A549 (cell line): ENCODE measurements at regions of chr11 and their contacts with region 1.

Region 1: GRCh38 chr11:4636962-4637661 is at the start of gene OR51D1:
- DNase-seq: peak; percentile 65 to 66
- ATAC-seq: peak; percentile 84 to 98
- H3K4me3 ChIP-seq: no peak within 1 kb of the TSS
- H3K27ac ChIP-seq: no peak within 1 kb of the TSS
- H3K4me1 ChIP-seq: no peaks in the 10 kb centered on the region
- CTCF ChIP-seq: peak; percentile 72
- EP300 ChIP-seq: no peak
- POLR2A ChIP-seq: no peak
- RAD21 ChIP-seq: peak; percentile 57 to 74
- polyA plus RNA-seq, gene OR51D1: not detected in 2 replicates

Region 2: DNA sequence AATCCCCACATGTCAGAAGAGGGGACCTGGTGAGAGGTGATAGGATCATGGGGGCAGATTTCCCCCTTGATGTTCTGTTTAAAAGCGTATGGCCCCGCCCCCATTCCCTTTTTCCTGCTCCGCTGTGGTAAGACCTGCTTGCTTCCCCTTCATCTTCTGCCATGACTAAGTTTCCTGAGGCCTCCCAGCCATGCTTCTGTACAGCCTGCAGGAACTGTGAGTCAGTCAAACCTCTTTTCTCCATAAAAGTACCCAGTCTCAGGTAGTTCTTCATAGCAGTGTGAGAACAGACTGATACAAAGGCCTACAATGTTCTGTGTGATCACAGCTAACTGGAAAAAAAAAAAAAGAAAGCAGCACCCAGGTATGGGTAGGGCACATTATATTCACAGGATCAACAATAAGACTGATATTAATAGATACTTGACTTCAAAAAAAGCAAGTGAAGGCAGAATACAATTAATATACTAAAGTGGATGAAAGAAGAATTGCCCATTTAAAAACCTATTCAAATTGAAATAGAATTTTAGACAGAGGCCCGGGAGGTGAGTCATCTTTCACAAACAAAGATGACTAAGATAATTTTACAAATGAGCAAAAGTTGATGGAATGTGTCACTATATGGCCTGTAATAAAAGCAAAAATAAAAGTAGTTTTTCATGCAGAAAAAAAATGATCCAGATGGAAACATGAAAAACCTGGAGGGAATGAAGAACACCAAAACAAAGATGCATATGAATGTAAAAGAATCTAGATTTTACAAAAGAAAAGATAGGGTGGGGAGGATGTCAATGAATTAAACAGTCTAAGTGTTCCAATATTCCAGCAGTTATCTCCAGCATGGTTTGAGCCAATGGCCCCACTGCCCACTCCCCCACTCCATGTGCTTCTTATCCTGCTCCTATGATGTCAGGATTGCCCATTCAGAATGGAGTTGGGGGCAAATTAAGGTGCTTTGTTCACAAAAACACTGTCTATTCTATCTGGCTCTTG is 156.2 kb before region 1 on chr11:
- CTCF ChIA-PET with region 1: no interaction called
- POLR2A ChIA-PET with region 1: no interaction called
- DNase-seq: no peak
- ATAC-seq: no peak
- H3K4me3 ChIP-seq: no peak overlapping the region
- H3K27ac ChIP-seq: no peak overlapping the region
- H3K4me1 ChIP-seq: peaks cover 8% of the 10 kb centered on the region; the same call in 2 of the 3 replicates
- CTCF ChIP-seq: no peak
- EP300 ChIP-seq: no peak
- POLR2A ChIP-seq: no peak
- RAD21 ChIP-seq: no peak

Region 3: GRCh38 chr11:4593739-4594138 is 43.4 kb before region 1 on chr11 and contains the start of gene OR52I1:
- CTCF ChIA-PET with region 1: interaction called, 10 read pairs
- POLR2A ChIA-PET with region 1: no interaction called
- DNase-seq: no peak
- ATAC-seq: no peak
- H3K4me3 ChIP-seq: no peak within 1 kb of the TSS
- H3K27ac ChIP-seq: no peak within 1 kb of the TSS
- H3K4me1 ChIP-seq: no peaks in the 10 kb centered on the region
- CTCF ChIP-seq: no peak
- EP300 ChIP-seq: no peak
- POLR2A ChIP-seq: no peak
- RAD21 ChIP-seq: no peak
- polyA plus RNA-seq, gene OR52I1: not detected in 2 replicates

Region 4: GRCh38 chr11:4626207-4627099 is 10.7 kb before region 1 on chr11:
- CTCF ChIA-PET with region 1: interaction called, 53 read pairs
- POLR2A ChIA-PET with region 1: no interaction called
- DNase-seq: peak; percentile 8 to 78
- ATAC-seq: peak; percentile 87 to 95; a peak in 5 of 6 replicates
- H3K4me3 ChIP-seq: no peak overlapping the region
- H3K27ac ChIP-seq: no peak overlapping the region
- H3K4me1 ChIP-seq: no peaks in the 10 kb centered on the region
- CTCF ChIP-seq: peak; percentile 48
- EP300 ChIP-seq: no peak
- POLR2A ChIP-seq: no peak
- RAD21 ChIP-seq: peak; percentile 63 to 73

Region 5: DNA sequence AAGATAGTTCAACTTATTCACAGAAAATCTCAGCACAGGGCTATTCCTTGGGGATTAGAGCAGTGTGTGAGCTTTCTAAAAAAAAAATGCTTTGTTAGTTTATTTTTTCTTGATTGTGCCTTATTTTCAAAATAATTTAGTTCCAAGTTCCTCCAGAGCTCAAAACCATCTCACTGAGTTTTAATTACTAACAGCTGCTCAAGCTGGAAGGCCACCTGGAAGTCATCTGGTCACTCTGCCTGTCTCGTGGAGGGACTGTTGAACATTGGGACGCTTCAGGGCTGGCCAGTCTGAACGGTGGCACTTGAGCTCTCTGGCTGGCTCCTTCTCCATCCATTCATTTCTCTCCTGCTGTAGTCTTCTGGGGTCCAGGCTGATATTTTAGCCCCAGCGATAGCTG is 10.7 kb after region 1 on chr11:
- CTCF ChIA-PET with region 1: interaction called, 18 read pairs
- POLR2A ChIA-PET with region 1: no interaction called
- DNase-seq: no peak
- ATAC-seq: no peak
- H3K4me3 ChIP-seq: no peak overlapping the region
- H3K27ac ChIP-seq: no peak overlapping the region
- H3K4me1 ChIP-seq: no peaks in the 10 kb centered on the region
- CTCF ChIP-seq: no peak
- EP300 ChIP-seq: no peak
- POLR2A ChIP-seq: no peak
- RAD21 ChIP-seq: no peak

Region 6: GRCh38 chr11:4782488-4782887 is 145.4 kb after region 1 on chr11:
- CTCF ChIA-PET with region 1: no interaction called
- POLR2A ChIA-PET with region 1: no interaction called
- DNase-seq: no peak
- ATAC-seq: no peak
- H3K4me3 ChIP-seq: no peak overlapping the region
- H3K27ac ChIP-seq: no peak overlapping the region
- H3K4me1 ChIP-seq: no peaks in the 10 kb centered on the region
- CTCF ChIP-seq: no peak
- EP300 ChIP-seq: no peak
- POLR2A ChIP-seq: no peak
- RAD21 ChIP-seq: no peak

Region 7: DNA sequence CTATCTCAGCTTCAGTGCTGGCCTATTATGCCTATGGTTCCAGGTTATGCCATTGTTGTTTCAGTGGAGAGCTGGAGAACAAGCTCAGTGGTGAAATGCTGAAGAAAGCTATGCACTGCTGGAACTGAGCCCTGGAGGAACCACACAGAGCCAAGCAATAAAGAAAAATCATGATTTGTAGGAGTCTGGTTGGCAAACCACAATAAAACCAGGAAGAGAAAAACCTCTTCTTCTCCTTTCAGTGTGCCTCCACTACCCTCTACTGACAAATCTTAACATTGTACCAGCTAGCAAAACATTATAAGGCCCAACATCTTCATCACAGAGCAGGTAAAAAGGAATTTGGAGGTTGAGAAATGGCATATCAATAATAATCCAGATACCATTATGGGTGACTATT is 189.3 kb after region 1 on chr11:
- CTCF ChIA-PET with region 1: interaction called, 10 read pairs
- POLR2A ChIA-PET with region 1: no interaction called
- DNase-seq: no peak
- ATAC-seq: no peak
- H3K4me3 ChIP-seq: no peak overlapping the region
- H3K27ac ChIP-seq: no peak overlapping the region
- H3K4me1 ChIP-seq: no peaks in the 10 kb centered on the region
- CTCF ChIP-seq: no peak
- EP300 ChIP-seq: no peak
- POLR2A ChIP-seq: no peak
- RAD21 ChIP-seq: peak in 1 of 2 experiments; percentile 29; a peak in 1 of 5 replicates

Region 8: GRCh38 chr11:5004424-5005274 is 367.5 kb after region 1 on chr11:
- CTCF ChIA-PET with region 1: interaction called, 23 read pairs
- POLR2A ChIA-PET with region 1: no interaction called
- DNase-seq: peak; percentile 5 to 62
- ATAC-seq: peak; percentile 43 to 67; a peak in 4 of 6 replicates
- H3K4me3 ChIP-seq: no peak overlapping the region
- H3K27ac ChIP-seq: no peak overlapping the region
- H3K4me1 ChIP-seq: no peaks in the 10 kb centered on the region
- CTCF ChIP-seq: peak; percentile 51
- EP300 ChIP-seq: no peak
- POLR2A ChIP-seq: no peak
- RAD21 ChIP-seq: peak; percentile 56 to 61